Activated CD8-positive, alpha-beta T cell treated with anti-CD3 and anti-CD28 coated beads for 36 hours (primary cell): ENCODE measurements at regions of chr6 and their contacts with region 1.

Region 1: DNA sequence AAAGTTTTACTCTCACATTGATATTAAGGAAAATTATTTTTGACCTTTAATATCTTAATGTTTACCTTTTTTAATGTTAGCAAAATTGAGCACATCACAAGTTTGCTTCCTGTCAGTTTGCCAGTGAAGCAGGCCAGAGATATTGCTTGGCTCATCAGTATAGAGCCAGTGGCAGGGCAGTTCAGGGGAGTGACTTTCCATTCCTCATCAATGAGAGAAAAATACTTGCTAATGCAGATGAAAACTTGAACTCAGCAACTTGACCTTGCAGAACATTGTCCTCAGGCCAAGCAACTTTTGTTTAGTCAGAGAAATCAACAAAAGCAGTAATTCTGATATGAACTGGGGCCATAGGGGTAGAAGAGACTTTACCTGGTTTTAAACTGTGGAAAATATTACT is 6.9 kb downstream of the TAB2 start:
- DNase-seq: peak; percentile 21
- ATAC-seq: peak; percentile 38
- H3K4me3 Mint-ChIP-seq: peak overlapping the region; percentile 36
- H3K27ac Mint-ChIP-seq: peak overlapping the region; percentile 82
- H3K4me1 Mint-ChIP-seq: peaks cover 70% of the 10 kb centered on the region
- H3K27me3 Mint-ChIP-seq: no peaks in the 10 kb centered on the region
- CTCF ChIP-seq: no peak

Region 2: GRCh38 chr6:149335924-149336608 is 11.6 kb after region 1 on chr6:
- CTCF ChIA-PET with region 1: interaction called, 13 read pairs
- POLR2A ChIA-PET with region 1: interaction called, 23 read pairs
- intact Hi-C with region 1: no loop called
- DNase-seq: peak; percentile 82
- ATAC-seq: peak; percentile 91
- H3K4me3 Mint-ChIP-seq: peak overlapping the region; percentile 45
- H3K27ac Mint-ChIP-seq: peak overlapping the region; percentile 95
- H3K4me1 Mint-ChIP-seq: peaks cover 87% of the 10 kb centered on the region
- H3K27me3 Mint-ChIP-seq: no peaks in the 10 kb centered on the region
- CTCF ChIP-seq: no peak

Region 3: GRCh38 chr6:149357726-149358538 is 33.5 kb after region 1 on chr6:
- CTCF ChIA-PET with region 1: no interaction called
- POLR2A ChIA-PET with region 1: no interaction called
- intact Hi-C with region 1: no loop called
- DNase-seq: no peak
- ATAC-seq: no peak
- H3K4me3 Mint-ChIP-seq: no peak overlapping the region
- H3K27ac Mint-ChIP-seq: peak overlapping the region; percentile 76
- H3K4me1 Mint-ChIP-seq: peaks cover 69% of the 10 kb centered on the region
- H3K27me3 Mint-ChIP-seq: no peaks in the 10 kb centered on the region
- CTCF ChIP-seq: no peak

Region 4: DNA sequence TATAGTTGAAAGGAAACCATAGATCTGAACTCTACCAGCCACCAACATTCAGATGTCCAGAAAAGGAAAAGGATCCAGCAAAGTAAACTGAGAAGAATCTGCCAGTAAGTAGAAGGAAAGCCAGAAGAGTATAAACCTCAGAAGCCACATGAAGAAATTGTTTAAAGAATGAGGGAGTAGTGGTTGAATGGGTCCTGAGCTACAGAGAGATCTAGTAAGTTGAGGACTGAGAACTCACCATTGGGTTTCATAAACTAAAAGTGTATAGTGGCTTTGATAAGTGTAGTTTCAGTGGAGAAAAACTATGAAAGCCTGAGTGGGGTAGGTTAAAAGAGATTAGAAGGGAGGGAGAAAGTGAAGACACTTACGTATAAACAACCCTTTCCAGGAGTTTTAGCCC is 43.6 kb after region 1 on chr6:
- CTCF ChIA-PET with region 1: interaction called, 3 read pairs
- POLR2A ChIA-PET with region 1: interaction called, 3 read pairs
- intact Hi-C with region 1: loop called (anchors 5 kb)
- DNase-seq: no peak
- ATAC-seq: peak; percentile 72
- H3K4me3 Mint-ChIP-seq: no peak overlapping the region
- H3K27ac Mint-ChIP-seq: no peak overlapping the region
- H3K4me1 Mint-ChIP-seq: peaks cover 45% of the 10 kb centered on the region
- H3K27me3 Mint-ChIP-seq: no peaks in the 10 kb centered on the region
- CTCF ChIP-seq: no peak